Body of pancreas (tissue), 4 donors: ENCODE measurements at regions of chr15 and their contacts with region 1.

Region 1: GRCh38 chr15:57866149-57866736 is 159.7 kb downstream of the POLR2M start:
- DNase-seq: peak; percentile 67 to 82 (median 70)
- ATAC-seq: peak; percentile 55
- H3K4me3 ChIP-seq: no peak overlapping the region
- H3K27ac ChIP-seq: no peak overlapping the region
- H3K4me1 ChIP-seq: no peaks in the 10 kb centered on the region
- H3K27me3 ChIP-seq: no peaks in the 10 kb centered on the region
- CTCF ChIP-seq: peak; percentile 47 to 79 (median 70)
- POLR2A ChIP-seq: no peak

Region 2: GRCh38 chr15:57667171-57667849 is 198.9 kb before region 1 on chr15:
- intact Hi-C with region 1: loop called (anchors 10 kb)
- DNase-seq: peak; percentile 32 to 58 (median 34)
- ATAC-seq: peak; percentile 85
- H3K4me3 ChIP-seq: no peak overlapping the region
- H3K27ac ChIP-seq: peak overlapping the region; percentile 39 to 75 (median 62)
- H3K4me1 ChIP-seq: peaks cover 52% of the 10 kb centered on the region
- H3K27me3 ChIP-seq: no peaks in the 10 kb centered on the region
- CTCF ChIP-seq: peak in 6 of 7 experiments; percentile 29 to 63 (median 60)
- POLR2A ChIP-seq: peak in 2 of 3 donors; percentile 11 to 30

Region 3: GRCh38 chr15:57743424-57743823 is 122.8 kb before region 1 on chr15:
- intact Hi-C with region 1: loop called (anchors 10 kb)
- DNase-seq: no peak
- ATAC-seq: no peak
- H3K4me3 ChIP-seq: no peak overlapping the region
- H3K27ac ChIP-seq: no peak overlapping the region
- H3K4me1 ChIP-seq: no peaks in the 10 kb centered on the region
- H3K27me3 ChIP-seq: no peaks in the 10 kb centered on the region
- CTCF ChIP-seq: no peak
- POLR2A ChIP-seq: no peak

Region 4: GRCh38 chr15:57947781-57948180 is 81.5 kb after region 1 on chr15:
- intact Hi-C with region 1: no loop called
- DNase-seq: peak in 1 of 4 donors; percentile 6
- ATAC-seq: no peak
- H3K4me3 ChIP-seq: no peak overlapping the region
- H3K27ac ChIP-seq: no peak overlapping the region
- H3K4me1 ChIP-seq: no peaks in the 10 kb centered on the region
- H3K27me3 ChIP-seq: no peaks in the 10 kb centered on the region
- CTCF ChIP-seq: no peak
- POLR2A ChIP-seq: no peak

Region 5: DNA sequence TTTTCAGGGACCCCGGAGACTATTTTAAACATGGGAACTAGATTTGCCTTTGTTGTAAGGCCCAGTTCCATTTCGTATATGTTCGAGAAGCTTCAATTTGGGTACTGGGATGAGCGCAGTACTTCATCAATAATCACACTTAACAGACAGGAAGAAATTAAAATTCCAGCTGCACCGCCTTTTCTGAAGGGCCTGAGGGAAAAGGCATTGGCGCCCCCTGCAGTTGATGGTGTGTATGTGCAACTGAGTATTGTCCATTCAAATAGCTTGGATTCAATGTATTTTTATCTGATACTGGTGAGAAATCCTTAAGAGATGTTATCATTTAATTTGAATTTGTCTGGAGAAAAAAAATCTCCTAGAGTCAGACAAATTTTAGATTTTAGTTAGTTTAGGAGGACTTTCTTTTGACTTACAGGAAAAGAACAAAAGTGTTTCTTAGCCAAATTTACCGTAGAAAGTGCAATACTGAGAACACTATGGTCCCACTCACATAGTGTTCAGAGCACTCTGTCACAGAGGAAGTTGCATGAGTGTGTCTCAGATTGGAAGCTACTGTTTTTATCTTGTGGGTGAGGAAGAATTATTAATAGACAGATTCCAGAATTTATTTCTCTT is 204.7 kb after region 1 on chr15:
- intact Hi-C with region 1: loop called (anchors 10 kb)
- DNase-seq: peak; percentile 56 to 64 (median 62)
- ATAC-seq: peak; percentile 30
- H3K4me3 ChIP-seq: no peak overlapping the region
- H3K27ac ChIP-seq: no peak overlapping the region
- H3K4me1 ChIP-seq: peaks cover 4% of the 10 kb centered on the region
- H3K27me3 ChIP-seq: peaks cover under 1 to 1% of the 10 kb centered on the region in 2 donors
- CTCF ChIP-seq: peak; percentile 77 to 95 (median 82)
- POLR2A ChIP-seq: no peak